Mammary epithelial cell (primary cell): ENCODE measurements at regions of chr4 and their contacts with region 1.

Region 1: GRCh38 chr4:453267-453666 is 45.7 kb downstream of the ZNF721 start:
- DNase-seq: no peak
- H3K4me3 ChIP-seq: no peak overlapping the region
- H3K27ac ChIP-seq: no peak overlapping the region
- H3K4me1 ChIP-seq: no peaks in the 10 kb centered on the region
- H3K27me3 ChIP-seq: no peaks in the 10 kb centered on the region
- CTCF ChIP-seq: no peak

Region 2: GRCh38 chr4:404006-404405 is 49.3 kb before region 1 on chr4:
- CTCF ChIA-PET with region 1: no interaction called
- dilution Hi-C with region 1: loop called (anchors 5 kb)
- in situ Hi-C with region 1: no loop called
- intact Hi-C with region 1: no loop called
- DNase-seq: no peak
- H3K4me3 ChIP-seq: no peak overlapping the region
- H3K27ac ChIP-seq: no peak overlapping the region
- H3K4me1 ChIP-seq: no peaks in the 10 kb centered on the region
- H3K27me3 ChIP-seq: no peaks in the 10 kb centered on the region
- CTCF ChIP-seq: no peak

Region 3: GRCh38 chr4:492412-492811 is 39.1 kb after region 1 on chr4:
- CTCF ChIA-PET with region 1: no interaction called
- dilution Hi-C with region 1: no loop called
- in situ Hi-C with region 1: no loop called
- intact Hi-C with region 1: no loop called
- DNase-seq: no peak
- H3K4me3 ChIP-seq: no peak overlapping the region
- H3K27ac ChIP-seq: no peak overlapping the region
- H3K4me1 ChIP-seq: no peaks in the 10 kb centered on the region
- H3K27me3 ChIP-seq: no peaks in the 10 kb centered on the region
- CTCF ChIP-seq: no peak

Region 4: GRCh38 chr4:519203-519651 is 66.0 kb after region 1 on chr4:
- CTCF ChIA-PET with region 1: no interaction called
- dilution Hi-C with region 1: loop called (anchors 10 kb)
- in situ Hi-C with region 1: no loop called
- intact Hi-C with region 1: no loop called
- DNase-seq: peak; percentile 33
- H3K4me3 ChIP-seq: no peak overlapping the region
- H3K27ac ChIP-seq: no peak overlapping the region
- H3K4me1 ChIP-seq: peaks cover 7% of the 10 kb centered on the region
- H3K27me3 ChIP-seq: no peaks in the 10 kb centered on the region
- CTCF ChIP-seq: no peak

Region 5: DNA sequence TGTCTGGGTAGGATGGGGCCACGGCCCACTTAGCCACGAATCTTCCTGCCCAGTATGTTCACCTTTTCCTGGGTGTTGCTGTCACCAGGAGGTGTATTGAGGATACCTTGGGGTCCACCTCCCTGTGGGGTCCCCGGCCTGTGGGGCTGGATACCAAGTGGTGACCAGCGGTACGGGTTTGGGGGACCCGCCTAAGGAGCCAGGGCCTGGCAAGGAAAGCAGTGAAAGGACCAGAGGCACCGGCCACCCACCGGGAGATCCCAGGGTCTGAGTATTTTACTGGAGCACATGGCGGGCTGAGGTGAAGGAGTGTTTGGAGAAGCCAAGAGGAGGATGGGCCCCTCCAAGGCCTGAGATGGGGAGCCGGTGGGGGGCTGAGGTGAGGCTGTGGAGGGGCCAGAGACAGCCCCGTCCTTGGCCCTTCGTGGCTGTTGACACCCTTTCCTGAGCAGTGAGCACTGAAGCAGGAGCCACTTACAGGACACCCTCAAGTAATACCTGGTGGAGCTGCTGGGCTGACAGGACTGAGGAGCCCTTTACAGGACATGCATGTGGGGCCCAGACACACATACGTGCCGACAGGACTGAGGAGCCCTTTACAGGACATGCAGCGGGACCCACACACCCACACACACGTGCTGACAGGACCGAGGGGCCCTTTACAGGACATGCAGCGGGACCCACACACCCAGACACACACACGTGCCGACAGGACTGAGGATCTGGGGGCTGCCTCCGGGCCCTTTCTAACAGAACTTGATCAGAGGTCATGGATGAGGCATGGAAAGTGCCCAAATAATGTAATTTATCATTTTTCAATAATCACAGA is 84.4 kb after region 1 on chr4:
- CTCF ChIA-PET with region 1: no interaction called
- dilution Hi-C with region 1: loop called (anchors 5 kb)
- in situ Hi-C with region 1: no loop called
- intact Hi-C with region 1: no loop called
- DNase-seq: no peak
- H3K4me3 ChIP-seq: no peak overlapping the region
- H3K27ac ChIP-seq: no peak overlapping the region
- H3K4me1 ChIP-seq: no peaks in the 10 kb centered on the region
- H3K27me3 ChIP-seq: no peaks in the 10 kb centered on the region
- CTCF ChIP-seq: no peak